ENCODE measurements at regions of chr1 and their contacts with region 1.

Region 1: GRCh38 chr1:168439456-168440375 is 104.1 kb downstream of the XCL2 start:
- DNase-seq: peak; percentile 95
- H3K4me3 Mint-ChIP-seq: peak overlapping the region; percentile 79
- H3K27ac Mint-ChIP-seq: peak overlapping the region; percentile 45
- H3K4me1 Mint-ChIP-seq: peaks cover 49% of the 10 kb centered on the region
- H3K27me3 Mint-ChIP-seq: peaks cover under 1% of the 10 kb centered on the region

Region 2: DNA sequence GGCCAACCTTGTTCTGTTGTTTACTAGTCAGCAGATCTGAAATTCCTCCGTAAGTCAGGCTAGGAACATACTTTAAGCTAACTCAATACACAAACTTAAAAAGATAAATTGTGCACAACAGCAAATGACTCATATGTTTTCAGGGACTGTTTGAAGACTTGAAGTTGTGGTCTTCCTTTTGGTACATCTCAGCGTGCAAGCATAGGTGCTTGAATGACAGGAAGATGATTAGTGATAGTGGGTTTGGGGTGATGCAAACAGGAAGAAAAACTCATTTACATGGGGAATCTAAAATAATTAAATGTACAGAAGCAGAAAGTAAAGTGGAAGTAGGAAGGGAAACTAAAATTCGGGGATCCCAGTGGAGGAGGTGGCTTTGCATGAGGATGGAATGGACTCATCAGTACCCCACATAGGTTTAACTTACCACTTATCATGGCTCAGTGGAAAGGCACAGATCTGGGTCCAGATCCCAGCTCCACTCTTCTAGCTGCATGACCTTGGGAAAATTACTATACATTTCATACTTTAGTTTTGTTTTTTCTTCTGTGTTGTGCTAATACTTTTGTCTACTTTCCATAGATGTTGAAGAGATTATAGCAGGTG is 18.2 kb before region 1 on chr1:
- intact Hi-C with region 1: loop called (anchors 2 kb)
- DNase-seq: peak; percentile 76
- H3K4me3 Mint-ChIP-seq: peak overlapping the region; percentile 44
- H3K27ac Mint-ChIP-seq: peak overlapping the region; percentile 52
- H3K4me1 Mint-ChIP-seq: peaks cover 15% of the 10 kb centered on the region
- H3K27me3 Mint-ChIP-seq: peaks cover 3% of the 10 kb centered on the region

Region 3: GRCh38 chr1:168466092-168466713 is 26.5 kb after region 1 on chr1:
- intact Hi-C with region 1: loop called (anchors 1 kb)
- DNase-seq: peak; percentile 75
- H3K4me3 Mint-ChIP-seq: peak overlapping the region; percentile 32
- H3K27ac Mint-ChIP-seq: peak overlapping the region; percentile 71
- H3K4me1 Mint-ChIP-seq: peaks cover 58% of the 10 kb centered on the region
- H3K27me3 Mint-ChIP-seq: no peaks in the 10 kb centered on the region

Region 4: DNA sequence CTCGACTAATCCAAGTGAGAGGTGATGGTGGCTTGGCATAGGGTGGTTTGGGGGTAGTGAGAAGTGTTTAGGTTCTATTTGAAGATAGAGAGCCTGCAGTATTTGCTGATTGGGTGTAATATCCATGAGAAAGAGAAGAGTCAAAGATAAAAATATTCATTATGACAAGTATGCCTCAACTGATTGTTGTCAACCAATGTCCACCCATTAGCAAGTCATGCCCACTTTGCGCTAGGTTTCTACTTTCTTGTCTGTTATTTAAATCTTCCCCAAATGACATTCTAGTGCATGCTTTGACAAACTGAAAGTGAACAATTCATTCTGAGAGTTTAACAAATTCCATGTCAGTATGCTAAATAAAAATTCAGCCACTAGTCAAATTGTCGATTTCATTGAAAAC is 132.9 kb after region 1 on chr1:
- intact Hi-C with region 1: loop called (anchors 1 kb)
- DNase-seq: no peak
- H3K4me3 Mint-ChIP-seq: no peak overlapping the region
- H3K27ac Mint-ChIP-seq: no peak overlapping the region
- H3K4me1 Mint-ChIP-seq: peaks cover 21% of the 10 kb centered on the region
- H3K27me3 Mint-ChIP-seq: peaks cover 21% of the 10 kb centered on the region

Region 5: GRCh38 chr1:169348383-169349036 is 908.8 kb after region 1 on chr1:
- intact Hi-C with region 1: loop called (anchors 5 kb)
- DNase-seq: peak; percentile 80
- H3K4me3 Mint-ChIP-seq: no peak overlapping the region
- H3K27ac Mint-ChIP-seq: no peak overlapping the region
- H3K4me1 Mint-ChIP-seq: peaks cover 11% of the 10 kb centered on the region
- H3K27me3 Mint-ChIP-seq: no peaks in the 10 kb centered on the region

Measured in activated CD4-positive, alpha-beta T cell treated with anti-CD3 and anti-CD28 coated beads, Interleukin-2, amount 10 ng/mL, durations not matched to agents 24 days and 14 days (primary cell).